Activated CD8-positive, alpha-beta memory T cell treated with anti-CD3 and anti-CD28 coated beads, Interleukin-2, amount 10 ng/mL, durations not matched to agents 7 days and 5 days (primary cell): ENCODE measurements at regions of chr22 and their contacts with region 1.

Region 1: DNA sequence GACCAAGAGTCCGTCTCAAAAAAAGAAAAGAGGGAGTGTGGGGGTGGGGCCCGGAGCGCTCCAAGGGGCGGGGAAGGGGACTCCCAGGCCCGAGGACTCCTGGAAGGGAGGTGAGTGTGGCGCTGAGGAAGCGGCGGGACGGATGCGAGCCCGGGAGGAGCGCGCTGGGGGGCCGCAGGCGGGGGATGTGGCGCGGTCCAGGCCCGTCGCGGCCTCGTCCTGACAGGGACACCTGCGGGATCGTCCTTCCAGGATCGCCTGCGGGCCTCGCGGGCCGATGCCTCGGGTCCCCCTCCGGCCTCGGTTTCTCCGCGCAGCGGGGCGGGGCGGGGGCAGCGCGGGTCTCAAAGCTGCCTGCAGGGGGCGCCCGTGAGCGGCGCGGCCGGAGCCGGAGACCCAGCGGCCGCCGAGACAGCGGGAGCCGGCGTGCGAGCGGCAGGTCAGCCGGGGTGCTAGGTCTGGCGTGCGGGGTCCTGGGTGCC is 3.8 kb upstream of the ADORA2A start:
- DNase-seq: peak; percentile 66
- ATAC-seq: peak; percentile 52
- H3K4me3 Mint-ChIP-seq: peak overlapping the region; percentile 62
- H3K27ac Mint-ChIP-seq: no peak overlapping the region
- H3K4me1 Mint-ChIP-seq: peaks cover 32% of the 10 kb centered on the region
- H3K27me3 Mint-ChIP-seq: peaks cover 10% of the 10 kb centered on the region

Region 2: GRCh38 chr22:24302591-24302990 is 121.0 kb before region 1 on chr22:
- CTCF ChIA-PET with region 1: no interaction called
- DNase-seq: no peak
- ATAC-seq: no peak
- H3K4me3 Mint-ChIP-seq: no peak overlapping the region
- H3K27ac Mint-ChIP-seq: no peak overlapping the region
- H3K4me1 Mint-ChIP-seq: peaks cover 53% of the 10 kb centered on the region
- H3K27me3 Mint-ChIP-seq: no peaks in the 10 kb centered on the region

Region 3: DNA sequence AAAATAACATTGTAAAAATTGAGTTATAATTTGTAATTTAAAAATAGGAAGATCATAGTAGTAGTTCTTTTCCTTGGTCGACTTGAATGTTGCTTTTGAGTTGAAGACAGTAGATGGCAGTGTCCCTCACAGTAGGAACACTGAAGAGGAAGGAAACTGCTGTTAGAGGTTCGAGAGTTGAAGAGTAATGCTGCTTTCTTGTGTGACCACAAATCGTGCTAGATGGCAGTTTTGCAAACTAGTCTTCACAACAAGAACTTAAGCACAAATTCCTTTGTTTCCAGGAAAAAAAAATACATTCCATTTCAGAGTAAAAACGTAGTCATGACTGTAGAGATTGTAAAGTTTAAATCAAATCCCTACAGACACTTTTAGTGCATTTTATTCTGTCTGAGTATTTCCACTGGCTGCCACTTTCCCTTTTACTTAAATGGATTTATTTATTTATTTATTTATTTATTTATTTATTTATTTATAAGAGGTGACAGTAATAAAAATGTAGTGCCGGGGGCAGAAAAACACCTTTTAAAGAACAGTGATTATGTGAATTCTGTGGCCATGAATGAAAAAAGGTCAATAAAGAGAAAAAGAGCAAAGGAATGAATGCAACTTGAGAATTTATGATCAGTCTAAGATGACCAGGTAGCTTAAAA is 98.3 kb before region 1 on chr22:
- CTCF ChIA-PET with region 1: interaction called, 20 read pairs
- DNase-seq: peak; percentile 51
- ATAC-seq: peak; percentile 92
- H3K4me3 Mint-ChIP-seq: no peak overlapping the region
- H3K27ac Mint-ChIP-seq: peak overlapping the region; percentile 14
- H3K4me1 Mint-ChIP-seq: peaks cover 33% of the 10 kb centered on the region
- H3K27me3 Mint-ChIP-seq: no peaks in the 10 kb centered on the region

Region 4: DNA sequence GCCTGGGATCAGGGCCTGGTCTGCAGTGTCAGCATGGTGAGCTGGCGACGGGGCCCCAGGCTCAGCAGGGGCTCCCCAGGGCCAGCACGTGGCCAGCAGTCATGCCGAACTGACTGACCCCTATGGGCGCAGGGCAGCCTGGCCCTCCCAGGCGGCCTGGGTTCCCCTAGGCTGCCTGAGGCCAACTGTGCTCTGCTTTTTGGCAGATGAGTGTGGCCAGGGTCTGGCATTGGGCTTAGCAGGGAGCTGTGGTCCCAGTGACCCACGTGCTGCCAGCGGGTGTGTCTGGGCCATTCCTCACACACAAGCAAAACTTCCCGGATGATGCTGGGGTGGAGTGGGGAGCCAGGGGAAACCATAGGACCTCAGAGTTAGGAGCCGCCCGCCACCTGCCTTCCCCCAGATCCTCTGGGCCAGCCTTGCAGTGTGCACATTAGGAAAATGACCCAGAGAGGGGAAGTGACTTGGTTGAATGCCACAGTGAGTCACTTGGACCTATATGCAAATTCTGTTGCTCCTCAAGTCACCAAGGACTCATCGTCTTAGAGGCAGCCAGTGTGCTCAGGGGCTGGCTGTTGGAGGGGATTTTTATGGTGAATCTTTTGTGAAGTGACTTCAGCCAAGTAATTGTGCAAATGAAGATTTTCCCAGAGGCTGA is 10.4 kb after region 1 on chr22:
- CTCF ChIA-PET with region 1: interaction called, 25 read pairs
- DNase-seq: peak; percentile 79
- ATAC-seq: peak; percentile 68
- H3K4me3 Mint-ChIP-seq: peak overlapping the region; percentile 34
- H3K27ac Mint-ChIP-seq: peak overlapping the region; percentile 87
- H3K4me1 Mint-ChIP-seq: peaks cover 87% of the 10 kb centered on the region
- H3K27me3 Mint-ChIP-seq: peaks cover 2% of the 10 kb centered on the region

Region 5: GRCh38 chr22:24482575-24482974 is 59.0 kb after region 1 on chr22:
- CTCF ChIA-PET with region 1: interaction called, 21 read pairs
- DNase-seq: no peak
- ATAC-seq: no peak
- H3K4me3 Mint-ChIP-seq: no peak overlapping the region
- H3K27ac Mint-ChIP-seq: no peak overlapping the region
- H3K4me1 Mint-ChIP-seq: peaks cover 32% of the 10 kb centered on the region
- H3K27me3 Mint-ChIP-seq: peaks cover 12% of the 10 kb centered on the region

Region 6: GRCh38 chr22:24525416-24526037 is 102.0 kb after region 1 on chr22:
- CTCF ChIA-PET with region 1: interaction called, 102 read pairs
- DNase-seq: peak; percentile 92
- ATAC-seq: peak; percentile 96
- H3K4me3 Mint-ChIP-seq: no peak overlapping the region
- H3K27ac Mint-ChIP-seq: no peak overlapping the region
- H3K4me1 Mint-ChIP-seq: peaks cover 14% of the 10 kb centered on the region
- H3K27me3 Mint-ChIP-seq: peaks cover 4% of the 10 kb centered on the region

Region 7: DNA sequence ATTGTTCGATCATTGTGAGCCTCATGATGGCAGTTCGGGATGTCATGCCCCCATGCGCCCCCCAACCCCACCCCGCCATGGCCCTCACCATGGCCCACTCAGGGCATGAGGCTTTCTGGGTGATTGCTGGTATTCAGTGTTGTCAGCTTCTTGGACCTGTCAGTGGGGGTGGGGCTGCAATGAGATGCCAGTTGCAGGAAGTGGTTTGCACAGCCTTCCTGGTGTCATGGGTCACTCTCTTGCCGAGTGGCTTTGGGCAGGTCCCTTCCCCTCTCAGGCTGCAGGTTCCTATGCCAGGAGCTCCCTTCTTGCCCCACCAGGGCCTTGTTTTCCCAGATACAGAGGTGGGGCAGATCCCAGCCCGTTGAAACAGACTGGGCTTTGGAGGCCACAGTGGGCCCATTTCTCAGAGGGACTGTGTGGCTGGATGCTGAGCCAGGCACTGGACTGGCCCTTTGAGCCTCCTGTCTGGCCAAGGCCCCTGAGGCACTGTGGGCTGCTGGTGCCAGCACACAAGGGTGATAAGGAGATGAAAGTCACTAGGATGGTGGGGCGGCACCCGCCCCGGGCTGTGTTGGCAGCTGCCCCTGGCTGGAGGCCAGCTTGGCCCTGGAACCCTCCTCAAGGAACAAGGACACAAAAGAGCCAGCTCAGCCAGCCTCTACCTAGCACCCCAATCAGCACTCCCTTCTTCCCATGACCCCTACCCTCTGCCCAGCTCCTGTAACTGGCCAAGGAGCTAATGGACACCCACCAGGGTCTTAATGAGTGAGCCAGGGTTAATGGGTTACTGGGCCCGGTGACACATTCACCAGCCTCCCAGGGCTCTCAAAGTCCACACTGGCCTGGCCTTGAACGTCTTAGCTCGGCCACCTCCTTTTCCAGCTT is 177.9 kb after region 1 on chr22:
- CTCF ChIA-PET with region 1: no interaction called
- DNase-seq: peak; percentile 75
- ATAC-seq: no peak
- H3K4me3 Mint-ChIP-seq: no peak overlapping the region
- H3K27ac Mint-ChIP-seq: peak overlapping the region; percentile 70
- H3K4me1 Mint-ChIP-seq: peaks cover 43% of the 10 kb centered on the region
- H3K27me3 Mint-ChIP-seq: no peaks in the 10 kb centered on the region